ENCODE measurements at regions of chr11 and their contacts with region 1.

Region 1: GRCh38 chr11:20647976-20648565 is 21.3 kb upstream of the NELL1 start:
- H3K4me3 ChIP-seq: no peak overlapping the region
- H3K27ac ChIP-seq: no peak overlapping the region
- H3K4me1 ChIP-seq: no peaks in the 10 kb centered on the region
- CTCF ChIP-seq: no peak

Region 2: GRCh38 chr11:20584093-20584774 is 63.8 kb before region 1 on chr11:
- CTCF ChIA-PET with region 1: no interaction called
- POLR2A ChIA-PET with region 1: no interaction called
- H3K4me3 ChIP-seq: no peak overlapping the region
- H3K27ac ChIP-seq: no peak overlapping the region
- H3K4me1 ChIP-seq: no peaks in the 10 kb centered on the region
- CTCF ChIP-seq: no peak

Region 3: GRCh38 chr11:20671856-20672546 is 23.9 kb after region 1 on chr11:
- CTCF ChIA-PET with region 1: interaction called, 25 read pairs
- POLR2A ChIA-PET with region 1: no interaction called
- H3K4me3 ChIP-seq: no peak overlapping the region
- H3K27ac ChIP-seq: no peak overlapping the region
- H3K4me1 ChIP-seq: no peaks in the 10 kb centered on the region; the same call in 1 of the 2 replicates
- CTCF ChIP-seq: no peak

Region 4: GRCh38 chr11:21511835-21512440 is 863.9 kb after region 1 on chr11:
- CTCF ChIA-PET with region 1: interaction called, 26 read pairs
- POLR2A ChIA-PET with region 1: interaction called, 3 read pairs
- H3K4me3 ChIP-seq: no peak overlapping the region
- H3K27ac ChIP-seq: no peak overlapping the region
- H3K4me1 ChIP-seq: no peaks in the 10 kb centered on the region
- CTCF ChIP-seq: no peak